Endothelial cell of umbilical vein (primary cell): ENCODE measurements at regions of chr10 and their contacts with region 1.

Region 1: DNA sequence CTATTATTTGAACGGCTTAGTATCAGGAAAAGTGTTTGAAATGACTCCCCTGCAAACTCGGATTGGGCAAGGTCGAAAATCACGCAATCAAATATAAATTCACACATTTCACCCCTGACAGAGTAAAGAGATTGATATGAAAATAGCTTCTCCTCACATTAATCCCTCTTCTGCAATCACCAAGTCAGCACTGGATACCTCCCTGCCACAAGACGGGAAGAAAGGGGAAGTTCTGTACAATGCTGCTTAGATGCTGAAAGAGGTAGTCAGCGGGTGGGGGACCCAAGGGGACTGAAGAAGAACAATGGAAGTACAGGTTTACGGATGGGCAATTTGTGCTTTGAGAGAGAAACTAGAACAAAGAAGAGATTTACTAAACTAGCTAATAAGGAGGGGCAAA is 72.0 kb upstream of the ANK3 start:
- DNase-seq: no peak
- H3K4me3 ChIP-seq: no peak overlapping the region
- H3K27ac ChIP-seq: no peak overlapping the region
- H3K4me1 ChIP-seq: no peaks in the 10 kb centered on the region
- H3K27me3 ChIP-seq: peaks cover 0 to 4% of the 10 kb centered on the region in 2 experiments
- CTCF ChIP-seq: no peak
- POLR2A ChIP-seq: no peak

Region 2: GRCh38 chr10:60921633-60922032 is 459.9 kb after region 1 on chr10:
- CTCF ChIA-PET with region 1: no interaction called
- POLR2A ChIA-PET with region 1: no interaction called
- dilution Hi-C with region 1: no loop called
- intact Hi-C with region 1: loop called (anchors 5 kb)
- DNase-seq: no peak
- H3K4me3 ChIP-seq: no peak overlapping the region
- H3K27ac ChIP-seq: no peak overlapping the region
- H3K4me1 ChIP-seq: no peaks in the 10 kb centered on the region
- H3K27me3 ChIP-seq: no peaks in the 10 kb centered on the region
- CTCF ChIP-seq: no peak
- POLR2A ChIP-seq: no peak